CD8-positive, alpha-beta T cell (primary cell): ENCODE measurements at regions of chr1 and their contacts with region 1.

Region 1: GRCh38 chr1:69246710-69247109 is 321.0 kb upstream of the LRRC7 start:
- DNase-seq: no peak
- ATAC-seq: no peak
- H3K4me3 ChIP-seq: no peak overlapping the region
- H3K4me3 Mint-ChIP-seq: no peak overlapping the region
- H3K27ac ChIP-seq: no peak overlapping the region
- H3K27ac Mint-ChIP-seq: no peak overlapping the region
- H3K4me1 ChIP-seq: no peaks in the 10 kb centered on the region
- H3K4me1 Mint-ChIP-seq: no peaks in the 10 kb centered on the region
- H3K27me3 ChIP-seq: no peaks in the 10 kb centered on the region
- H3K27me3 Mint-ChIP-seq: no peaks in the 10 kb centered on the region
- CTCF ChIP-seq: no peak

Region 2: GRCh38 chr1:69172003-69173000 is 74.4 kb before region 1 on chr1:
- CTCF ChIA-PET with region 1: no interaction called
- POLR2A ChIA-PET with region 1: no interaction called
- intact Hi-C with region 1: no loop called
- DNase-seq: no peak
- ATAC-seq: no peak
- H3K4me3 ChIP-seq: no peak overlapping the region
- H3K4me3 Mint-ChIP-seq: no peak overlapping the region
- H3K27ac ChIP-seq: no peak overlapping the region
- H3K27ac Mint-ChIP-seq: no peak overlapping the region
- H3K4me1 ChIP-seq: no peaks in the 10 kb centered on the region
- H3K4me1 Mint-ChIP-seq: no peaks in the 10 kb centered on the region
- H3K27me3 ChIP-seq: no peaks in the 10 kb centered on the region
- H3K27me3 Mint-ChIP-seq: no peaks in the 10 kb centered on the region
- CTCF ChIP-seq: no peak

Region 3: DNA sequence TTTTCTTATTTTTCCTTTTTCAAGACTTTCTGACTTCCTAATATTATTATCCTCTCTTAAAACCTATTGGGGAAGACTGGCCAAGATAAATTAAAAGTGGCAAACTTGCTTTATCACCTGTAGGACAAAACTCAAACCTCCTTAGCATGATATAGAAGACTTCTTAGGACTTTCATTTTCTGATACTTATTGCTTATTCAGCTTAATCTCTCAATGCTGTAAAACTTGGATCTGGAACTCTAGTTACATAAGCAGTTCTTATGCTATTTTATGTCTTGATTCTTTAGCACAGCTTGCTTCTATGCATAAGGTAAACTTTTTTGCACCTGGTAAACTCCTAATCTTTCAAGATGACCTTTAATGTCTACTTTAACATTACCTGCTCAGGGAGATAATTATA is 61.3 kb before region 1 on chr1:
- CTCF ChIA-PET with region 1: no interaction called
- POLR2A ChIA-PET with region 1: no interaction called
- intact Hi-C with region 1: loop called in 1 of 2 experiments (anchors 10 kb)
- DNase-seq: no peak
- ATAC-seq: no peak
- H3K4me3 ChIP-seq: no peak overlapping the region
- H3K4me3 Mint-ChIP-seq: no peak overlapping the region
- H3K27ac ChIP-seq: no peak overlapping the region
- H3K27ac Mint-ChIP-seq: no peak overlapping the region
- H3K4me1 ChIP-seq: no peaks in the 10 kb centered on the region
- H3K4me1 Mint-ChIP-seq: no peaks in the 10 kb centered on the region
- H3K27me3 ChIP-seq: no peaks in the 10 kb centered on the region
- H3K27me3 Mint-ChIP-seq: no peaks in the 10 kb centered on the region
- CTCF ChIP-seq: no peak